MCF 10A (cell line): ENCODE measurements at regions of chr16 and their contacts with region 1.

Region 1: DNA sequence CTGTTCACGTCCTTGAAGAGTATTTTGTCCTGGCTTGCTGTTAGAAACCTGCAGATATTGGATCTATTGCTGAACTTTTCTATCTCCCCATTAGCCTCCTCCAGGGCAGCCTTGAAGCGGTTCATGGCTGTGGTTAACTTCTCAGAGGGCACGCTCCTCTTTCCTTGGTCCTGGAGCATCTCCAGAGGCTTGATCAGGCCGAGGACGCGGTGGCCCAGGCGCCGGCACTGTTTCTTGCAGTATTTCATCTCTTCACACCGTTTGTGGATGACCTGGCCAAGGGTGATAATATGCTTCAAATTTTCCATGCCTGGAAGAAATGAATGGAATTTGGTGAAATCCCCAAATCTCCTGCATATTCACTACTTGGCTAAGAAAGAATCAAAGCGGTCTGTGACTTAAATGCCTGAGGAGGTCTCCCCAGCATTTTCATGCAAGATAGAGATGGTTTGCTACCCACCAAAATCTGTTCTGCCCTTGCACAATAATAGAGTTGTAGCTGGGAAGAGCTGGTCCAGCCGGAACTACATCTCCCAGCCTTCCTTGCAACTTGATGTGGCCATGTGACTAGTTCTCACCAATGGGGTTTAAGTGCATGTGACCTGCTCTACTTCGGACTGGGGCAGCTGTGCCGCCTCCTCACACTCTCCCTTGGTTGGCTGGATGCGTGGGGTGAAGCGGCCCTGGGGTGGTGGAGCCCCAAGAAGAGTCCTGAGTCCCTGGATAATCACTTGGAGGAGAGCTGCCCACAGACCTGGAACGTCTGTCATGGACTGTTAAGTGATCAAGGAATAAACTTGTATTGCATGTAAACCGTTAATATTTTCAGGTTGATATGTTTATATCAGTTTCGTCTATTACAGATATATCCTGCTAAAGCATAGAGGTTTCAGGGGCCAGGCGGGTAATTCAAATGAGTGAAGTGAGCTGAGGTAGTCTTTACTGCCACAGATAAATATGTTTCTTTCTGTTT is 4.9 kb downstream of the MLKL start:
- DNase-seq: peak; percentile 90
- H3K4me3 Mint-ChIP-seq: peak overlapping the region; percentile 77
- H3K27ac Mint-ChIP-seq: peak overlapping the region; percentile 18
- H3K4me1 Mint-ChIP-seq: peaks cover 29% of the 10 kb centered on the region
- H3K27me3 Mint-ChIP-seq: no peaks in the 10 kb centered on the region
- CTCF ChIP-seq: no peak

Region 2: GRCh38 chr16:74650966-74651567 is 44.7 kb before region 1 on chr16:
- CTCF ChIA-PET with region 1: interaction called, 4 read pairs
- POLR2A ChIA-PET with region 1: interaction called, 13 read pairs
- intact Hi-C with region 1: no loop called
- DNase-seq: peak; percentile 8
- H3K4me3 Mint-ChIP-seq: no peak overlapping the region
- H3K27ac Mint-ChIP-seq: no peak overlapping the region
- H3K4me1 Mint-ChIP-seq: peaks cover 24% of the 10 kb centered on the region
- H3K27me3 Mint-ChIP-seq: no peaks in the 10 kb centered on the region
- CTCF ChIP-seq: peak; percentile 55

Region 3: GRCh38 chr16:74666425-74667254 is 29.1 kb before region 1 on chr16 and contains the start of gene RFWD3:
- CTCF ChIA-PET with region 1: interaction called, 3 read pairs
- POLR2A ChIA-PET with region 1: interaction called, 33 read pairs
- intact Hi-C with region 1: no loop called
- DNase-seq: peak; percentile 98
- H3K4me3 Mint-ChIP-seq: peak within 1 kb of the TSS; percentile 89
- H3K27ac Mint-ChIP-seq: peak within 1 kb of the TSS; percentile 97
- H3K4me1 Mint-ChIP-seq: peaks cover 5% of the 10 kb centered on the region
- H3K27me3 Mint-ChIP-seq: no peaks in the 10 kb centered on the region
- CTCF ChIP-seq: no peak
- total RNA-seq, gene RFWD3: 31.2 and 33.7 TPM in 2 replicates

Region 4: DNA sequence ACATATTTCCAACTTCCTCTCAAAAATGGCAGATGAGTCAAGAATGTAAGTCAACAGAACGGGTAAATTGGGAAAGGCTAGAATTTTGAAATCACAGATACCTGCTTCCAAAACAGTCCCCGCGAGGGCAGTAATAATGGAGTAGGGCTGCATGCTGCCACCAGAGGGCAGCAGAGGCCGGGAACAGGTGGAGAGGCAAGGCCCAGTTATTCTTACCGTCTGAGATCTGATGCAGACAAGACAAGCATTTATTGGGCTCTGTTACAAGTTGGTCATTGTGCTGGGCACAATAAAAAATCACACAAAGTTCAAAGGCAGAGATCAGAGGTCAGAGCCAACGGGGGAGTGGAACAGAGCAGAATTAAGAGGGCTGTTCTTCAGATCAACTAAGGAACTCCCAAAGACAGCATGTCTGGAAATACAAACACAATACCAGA is 13.7 kb after region 1 on chr16:
- CTCF ChIA-PET with region 1: interaction called, 14 read pairs
- POLR2A ChIA-PET with region 1: interaction called, 7 read pairs
- intact Hi-C with region 1: no loop called
- DNase-seq: peak; percentile 91
- H3K4me3 Mint-ChIP-seq: no peak overlapping the region
- H3K27ac Mint-ChIP-seq: no peak overlapping the region
- H3K4me1 Mint-ChIP-seq: no peaks in the 10 kb centered on the region
- H3K27me3 Mint-ChIP-seq: no peaks in the 10 kb centered on the region
- CTCF ChIP-seq: peak; percentile 93

Region 5: DNA sequence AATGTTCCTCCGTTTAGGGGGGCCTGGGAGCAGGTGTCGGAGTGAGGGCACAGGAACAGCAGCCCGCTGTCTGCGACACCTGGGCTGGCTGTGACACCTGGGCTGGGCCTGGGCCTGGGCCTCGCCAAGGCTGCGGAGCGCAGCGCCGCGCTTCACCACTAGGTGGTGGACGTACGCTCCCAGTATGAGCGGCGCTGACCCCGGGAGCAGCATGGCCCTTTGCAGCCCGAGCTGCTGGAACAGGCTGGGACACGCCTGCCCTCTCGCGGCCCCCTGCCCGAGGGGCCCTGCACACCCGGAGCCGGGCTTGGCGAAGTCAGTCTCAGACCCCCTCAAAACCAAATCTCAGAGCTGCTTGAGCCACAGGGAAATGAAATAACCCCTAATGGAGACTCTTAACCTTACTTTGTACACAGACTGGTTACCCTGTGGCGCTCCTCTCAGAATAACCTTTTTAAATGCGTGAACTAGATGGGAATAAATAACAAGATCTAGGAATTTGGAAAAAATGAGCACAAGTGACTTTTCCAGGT is 117.4 kb after region 1 on chr16:
- CTCF ChIA-PET with region 1: interaction called, 4 read pairs
- POLR2A ChIA-PET with region 1: no interaction called
- intact Hi-C with region 1: loop called (anchors 2 kb)
- DNase-seq: peak; percentile 73
- H3K4me3 Mint-ChIP-seq: no peak overlapping the region
- H3K27ac Mint-ChIP-seq: no peak overlapping the region
- H3K4me1 Mint-ChIP-seq: peaks cover 15% of the 10 kb centered on the region
- H3K27me3 Mint-ChIP-seq: no peaks in the 10 kb centered on the region
- CTCF ChIP-seq: peak; percentile 90